Activated T-helper 2 cell treated with anti-CD3 and anti-CD28 coated beads, Interferon-gamma antibody, Interleukin-2, Interleukin-4, amounts not matched to agents 10 μg/mL and 5 μg/mL and 100 μg/mL, durations not matched to agents 14 hours and 24 hours and 36 hours (primary cell): ENCODE measurements at regions of chr15 and their contacts with region 1.

Region 1: DNA sequence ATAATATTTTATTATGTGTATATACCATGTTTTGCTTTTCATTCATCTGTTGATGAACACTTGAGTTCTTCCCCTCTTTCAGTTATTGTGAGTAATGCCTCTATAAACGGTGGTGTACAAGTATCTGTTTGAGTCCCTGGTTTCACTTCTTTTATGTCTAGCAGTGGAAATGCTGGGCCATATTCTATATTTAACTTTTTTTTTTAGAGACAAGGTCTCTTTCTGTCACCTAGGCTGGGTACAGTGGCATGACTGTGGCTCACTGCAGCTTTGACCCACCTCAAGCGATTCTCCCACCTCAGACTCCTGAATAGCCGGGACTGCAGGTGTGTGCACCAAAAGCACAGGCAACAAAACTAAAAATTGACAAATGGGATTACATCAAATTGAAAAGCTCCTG is 19.9 kb downstream of the GOLM2 start:
- DNase-seq: no peak
- H3K4me3 Mint-ChIP-seq: peak overlapping the region; percentile 65
- H3K27ac Mint-ChIP-seq: peak overlapping the region; percentile 97
- H3K4me1 Mint-ChIP-seq: peaks cover 46% of the 10 kb centered on the region
- H3K27me3 Mint-ChIP-seq: no peaks in the 10 kb centered on the region

Region 2: DNA sequence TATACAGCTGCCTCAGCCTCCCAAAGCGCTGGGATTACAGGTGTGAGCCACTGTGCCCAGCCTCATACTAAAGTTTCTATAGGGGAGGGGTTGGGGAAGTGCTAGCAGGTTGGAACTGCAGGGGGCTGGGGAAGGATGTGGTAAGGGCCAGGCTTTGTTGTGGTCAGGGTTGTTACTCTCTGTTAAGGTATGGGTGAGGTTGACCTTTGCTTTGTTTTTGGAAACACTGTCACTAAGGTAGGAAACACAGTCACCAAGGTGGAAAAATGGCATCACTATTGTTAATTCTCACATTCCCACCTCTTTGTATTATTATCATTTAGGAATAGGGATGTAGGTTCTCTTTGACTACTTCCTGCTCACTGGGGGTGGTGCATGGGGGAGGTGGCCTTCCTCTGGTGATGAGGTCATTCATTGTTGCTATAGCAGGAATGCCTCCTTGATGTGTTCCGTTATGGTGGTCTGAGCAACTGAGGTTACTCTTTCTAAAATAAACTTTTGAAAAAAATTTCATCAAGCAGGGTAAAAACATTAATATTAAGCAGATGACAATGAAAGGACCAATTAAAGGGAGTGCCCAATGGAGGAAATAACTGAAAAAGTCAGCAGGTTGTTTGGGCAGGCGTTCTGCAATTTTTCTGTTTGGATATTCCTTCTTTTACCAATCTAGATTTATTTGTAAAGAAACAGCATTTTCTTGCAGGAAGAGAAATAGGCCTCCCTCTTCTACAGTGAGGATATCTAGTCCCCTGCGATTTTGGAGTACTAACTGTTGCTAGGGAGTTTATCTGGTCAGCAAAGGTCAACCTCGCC is 331.1 kb before region 1 on chr15:
- intact Hi-C with region 1: loop called (anchors 5 kb)
- DNase-seq: peak; percentile 60
- H3K4me3 Mint-ChIP-seq: no peak overlapping the region
- H3K27ac Mint-ChIP-seq: peak overlapping the region; percentile 21
- H3K4me1 Mint-ChIP-seq: peaks cover 26% of the 10 kb centered on the region
- H3K27me3 Mint-ChIP-seq: peaks cover 18% of the 10 kb centered on the region

Region 3: GRCh38 chr15:44414001-44414400 is 105.6 kb after region 1 on chr15:
- intact Hi-C with region 1: loop called (anchors 1 kb)
- DNase-seq: no peak
- H3K4me3 Mint-ChIP-seq: no peak overlapping the region
- H3K27ac Mint-ChIP-seq: no peak overlapping the region
- H3K4me1 Mint-ChIP-seq: peaks cover 7% of the 10 kb centered on the region
- H3K27me3 Mint-ChIP-seq: no peaks in the 10 kb centered on the region

Region 4: GRCh38 chr15:44450172-44450571 is 141.8 kb after region 1 on chr15:
- intact Hi-C with region 1: loop called (anchors 2 kb)
- DNase-seq: no peak
- H3K4me3 Mint-ChIP-seq: no peak overlapping the region
- H3K27ac Mint-ChIP-seq: no peak overlapping the region
- H3K4me1 Mint-ChIP-seq: peaks cover 31% of the 10 kb centered on the region
- H3K27me3 Mint-ChIP-seq: no peaks in the 10 kb centered on the region

Region 5: DNA sequence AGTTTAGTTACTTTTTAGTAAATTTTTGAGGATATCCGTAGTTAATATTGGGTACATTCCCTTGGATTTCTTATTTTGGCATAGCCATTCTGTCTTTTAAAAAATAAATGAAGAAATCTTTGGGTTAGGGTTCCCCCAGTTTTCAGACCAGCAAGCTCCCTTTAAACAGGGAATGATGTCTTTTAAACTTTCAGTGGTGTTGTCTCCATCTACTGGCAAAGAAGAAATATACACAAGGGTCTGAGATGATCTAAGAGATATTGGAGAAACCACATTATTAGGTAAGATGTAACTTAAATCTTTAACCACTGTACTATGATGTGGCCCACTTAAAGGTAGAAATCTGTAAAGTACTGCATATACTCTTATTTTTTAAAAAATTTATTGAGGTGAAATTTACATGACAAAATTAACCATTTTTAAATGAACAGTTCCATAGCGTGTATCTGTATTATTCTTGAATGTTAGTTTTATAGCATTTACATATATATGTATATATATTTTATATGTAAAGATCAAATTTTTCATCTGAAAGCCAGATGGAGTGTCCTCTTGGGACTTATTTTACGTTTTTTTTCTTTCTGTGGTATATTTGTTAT is 193.5 kb after region 1 on chr15:
- intact Hi-C with region 1: loop called (anchors 1 kb)
- DNase-seq: no peak
- H3K4me3 Mint-ChIP-seq: no peak overlapping the region
- H3K27ac Mint-ChIP-seq: peak overlapping the region; percentile 68
- H3K4me1 Mint-ChIP-seq: peaks cover 23% of the 10 kb centered on the region
- H3K27me3 Mint-ChIP-seq: no peaks in the 10 kb centered on the region